Heart right ventricle (tissue), 16 donors: ENCODE measurements at regions of chr9 and their contacts with region 1.

Region 1: DNA sequence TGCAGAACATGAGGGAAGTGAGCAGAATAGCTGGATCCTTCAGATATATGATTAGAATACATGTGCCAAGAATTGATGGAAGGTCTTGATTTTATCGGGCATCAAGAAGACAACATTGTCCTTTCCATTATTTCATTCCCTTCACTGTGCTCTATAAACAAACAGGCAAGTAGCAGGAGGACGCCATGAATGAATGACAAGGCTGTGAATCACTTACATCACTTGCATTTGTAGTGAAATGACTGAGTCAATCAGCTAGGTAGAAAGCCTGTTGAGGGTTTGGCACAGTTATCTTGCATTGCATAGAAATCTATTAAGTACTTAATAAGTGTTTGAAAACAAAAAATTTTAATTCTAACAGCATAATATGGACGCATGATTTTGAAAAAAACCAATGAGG is 548.8 kb upstream of the IZUMO3 start:
- DNase-seq: no peak
- ATAC-seq: no peak
- H3K4me3 ChIP-seq: no peak overlapping the region
- H3K27ac ChIP-seq: no peak overlapping the region
- H3K4me1 ChIP-seq: no peaks in the 10 kb centered on the region
- H3K27me3 ChIP-seq: no peaks in the 10 kb centered on the region
- CTCF ChIP-seq: no peak

Region 2: GRCh38 chr9:26066237-26066636 is 971.7 kb after region 1 on chr9:
- intact Hi-C with region 1: no loop called
- DNase-seq: no peak
- ATAC-seq: no peak
- H3K4me3 ChIP-seq: no peak overlapping the region
- H3K27ac ChIP-seq: no peak overlapping the region
- H3K4me1 ChIP-seq: no peaks in the 10 kb centered on the region
- H3K27me3 ChIP-seq: no peaks in the 10 kb centered on the region
- CTCF ChIP-seq: no peak

Region 3: DNA sequence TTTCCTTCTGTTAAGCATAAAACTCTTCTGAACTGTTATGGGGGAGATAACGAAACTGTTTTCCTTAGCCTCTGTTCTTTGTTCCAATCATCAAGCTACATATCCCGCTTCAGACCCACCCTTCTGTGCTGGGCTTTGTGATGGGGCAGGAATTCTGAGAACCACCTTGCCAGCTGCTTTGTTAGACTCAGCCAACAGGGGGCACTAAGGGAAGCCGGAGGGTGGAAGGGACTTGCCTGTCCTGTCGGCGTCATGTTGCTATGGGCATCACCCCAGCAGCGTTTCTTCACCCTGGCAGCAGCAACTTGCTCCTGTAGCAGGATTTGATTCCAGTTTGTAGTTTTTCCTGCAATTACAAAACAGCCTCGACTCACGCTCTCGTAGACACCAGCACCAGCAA is 1629.0 kb after region 1 on chr9:
- intact Hi-C with region 1: loop called in 1 of 10 experiments (anchors 5 kb)
- DNase-seq: no peak
- ATAC-seq: no peak
- H3K4me3 ChIP-seq: no peak overlapping the region
- H3K27ac ChIP-seq: no peak overlapping the region
- H3K4me1 ChIP-seq: no peaks in the 10 kb centered on the region
- H3K27me3 ChIP-seq: peaks cover 0 to 37% (median 20%) of the 10 kb centered on the region in 7 donors
- CTCF ChIP-seq: peak in 1 of 9 donors; percentile 31